Aorta (tissue), 5 donors: ENCODE measurements at regions of chr1 and their contacts with region 1.

Region 1: DNA sequence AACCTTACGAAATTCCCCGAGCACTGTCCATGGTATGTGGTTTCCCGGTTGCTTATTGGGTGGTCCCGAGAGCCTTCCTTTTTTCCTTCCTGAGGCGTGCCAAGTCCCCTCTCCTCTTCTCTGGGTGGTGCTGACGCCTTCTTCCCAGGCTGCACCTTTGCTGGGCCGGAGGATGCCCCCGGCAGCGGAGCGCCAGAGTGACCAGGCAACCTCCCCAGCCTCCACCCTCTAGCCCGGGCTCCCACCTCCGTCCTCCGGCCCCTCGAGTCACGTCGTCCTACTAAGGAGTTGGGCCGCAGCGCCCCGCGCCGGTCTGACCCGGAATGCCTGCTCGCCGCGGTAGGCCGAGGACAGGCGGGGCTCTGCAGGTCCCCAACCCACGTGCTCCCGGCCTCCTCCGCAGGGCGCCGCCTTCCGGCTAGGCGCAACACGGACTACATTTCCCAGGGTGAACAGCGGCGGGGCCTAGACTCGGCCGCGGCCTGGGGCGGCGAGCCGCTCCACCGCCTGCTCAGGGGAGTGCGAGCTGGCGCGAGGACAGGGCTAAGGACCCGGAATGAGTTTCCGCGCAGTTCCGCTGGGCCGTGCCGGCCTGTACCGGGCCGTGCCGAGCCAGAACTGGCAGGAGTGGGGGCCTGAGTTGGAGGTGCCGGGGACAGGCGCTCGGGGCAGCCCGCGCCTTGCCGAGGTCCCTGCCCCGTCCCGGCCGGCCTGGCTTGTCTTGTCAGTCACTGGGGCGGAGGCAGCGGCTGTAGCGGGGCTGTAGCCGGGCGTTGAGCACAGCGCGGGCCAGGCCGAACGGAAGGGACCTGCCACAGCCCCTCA is at the start of gene IPO13:
- DNase-seq: peak; percentile 97 to 99
- ATAC-seq: peak; percentile 98
- H3K4me3 ChIP-seq: peak within 1 kb of the TSS; percentile 59 to 73
- H3K27ac ChIP-seq: peak within 1 kb of the TSS; percentile 71 to 80
- H3K4me1 ChIP-seq: no peaks in the 10 kb centered on the region
- H3K27me3 ChIP-seq: no peaks in the 10 kb centered on the region
- total RNA-seq, gene IPO13: 19.4 to 22.5 TPM

Region 2: GRCh38 chr1:43930168-43930948 is 16.1 kb before region 1 on chr1:
- intact Hi-C with region 1: no loop called
- DNase-seq: peak in 1 of 2 donors; percentile 53
- ATAC-seq: no peak
- H3K4me3 ChIP-seq: no peak overlapping the region
- H3K27ac ChIP-seq: no peak overlapping the region
- H3K4me1 ChIP-seq: no peaks in the 10 kb centered on the region
- H3K27me3 ChIP-seq: no peaks in the 10 kb centered on the region

Region 3: GRCh38 chr1:43969746-43970466 is 23.5 kb after region 1 on chr1 and contains the start of gene DPH2:
- intact Hi-C with region 1: loop called in 1 of 2 experiments (anchors 1 kb)
- DNase-seq: peak; percentile 99
- ATAC-seq: peak; percentile 95
- H3K4me3 ChIP-seq: peak within 1 kb of the TSS; percentile 55 to 60
- H3K27ac ChIP-seq: no peak within 1 kb of the TSS
- H3K4me1 ChIP-seq: no peaks in the 10 kb centered on the region
- H3K27me3 ChIP-seq: no peaks in the 10 kb centered on the region
- total RNA-seq, gene DPH2: 11.8 to 14.7 TPM